ENCODE measurements at regions of chr13 and their contacts with region 1.

Region 1: GRCh38 chr13:63629591-63629990 is 2213.9 kb upstream of the PCDH20 start:
- DNase-seq: no peak
- H3K4me3 ChIP-seq: no peak overlapping the region
- H3K27ac ChIP-seq: no peak overlapping the region
- H3K4me1 ChIP-seq: no peaks in the 10 kb centered on the region
- H3K27me3 ChIP-seq: no peaks in the 10 kb centered on the region
- CTCF ChIP-seq: no peak
- POLR2A ChIP-seq: no peak

Region 2: DNA sequence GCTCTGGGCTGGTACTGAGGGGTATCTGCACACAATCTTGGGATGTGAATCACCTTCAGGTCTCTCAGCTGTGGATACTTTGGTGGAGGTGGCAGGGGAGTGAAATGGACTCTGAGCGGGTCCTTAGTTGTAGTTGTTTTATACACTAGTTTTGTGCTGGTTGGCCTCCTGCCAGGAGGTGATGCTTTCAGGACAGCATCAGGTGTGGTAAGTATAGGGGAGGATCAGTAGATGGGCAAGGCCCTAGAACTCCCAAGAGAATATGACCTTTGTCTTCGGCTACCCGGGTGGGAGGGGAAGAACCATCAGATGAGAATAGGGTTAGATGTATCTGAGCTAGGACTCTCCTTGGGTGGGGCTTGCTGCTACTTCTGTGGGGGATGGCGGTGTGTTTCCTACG is 70.4 kb after region 1 on chr13:
- CTCF ChIA-PET with region 1: no interaction called
- POLR2A ChIA-PET with region 1: no interaction called
- dilution Hi-C with region 1: no loop called
- intact Hi-C with region 1: loop called (anchors 2 kb)
- DNase-seq: no peak
- H3K4me3 ChIP-seq: no peak overlapping the region
- H3K27ac ChIP-seq: no peak overlapping the region
- H3K4me1 ChIP-seq: no peaks in the 10 kb centered on the region
- H3K27me3 ChIP-seq: no peaks in the 10 kb centered on the region
- CTCF ChIP-seq: no peak
- POLR2A ChIP-seq: no peak

Region 3: DNA sequence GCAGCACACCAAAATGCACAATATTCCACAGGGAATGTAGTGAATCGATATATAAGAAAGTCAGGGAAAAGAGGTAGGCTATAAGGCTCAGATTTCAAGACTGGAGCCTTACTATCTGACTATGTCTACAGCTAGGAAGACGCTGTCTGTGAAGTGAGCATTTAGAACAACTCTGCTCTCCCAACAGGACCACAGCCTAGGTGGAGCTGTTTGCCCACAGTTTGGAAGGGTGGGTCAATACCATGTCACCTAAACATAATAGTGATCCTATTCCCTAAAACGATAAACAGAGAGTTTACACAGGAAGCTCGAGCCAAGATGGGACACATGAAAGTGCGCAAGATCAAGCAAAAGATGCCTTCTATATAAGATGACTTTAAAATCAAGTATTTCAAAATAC is 272.0 kb after region 1 on chr13:
- CTCF ChIA-PET with region 1: no interaction called
- POLR2A ChIA-PET with region 1: no interaction called
- dilution Hi-C with region 1: no loop called
- intact Hi-C with region 1: no loop called
- DNase-seq: no peak
- H3K4me3 ChIP-seq: no peak overlapping the region
- H3K27ac ChIP-seq: no peak overlapping the region
- H3K4me1 ChIP-seq: no peaks in the 10 kb centered on the region
- H3K27me3 ChIP-seq: no peaks in the 10 kb centered on the region
- CTCF ChIP-seq: no peak
- POLR2A ChIP-seq: no peak